ENCODE measurements at regions of chr4 and their contacts with region 1.

Region 1: GRCh38 chr4:74531963-74532794 is 87.2 kb downstream of the AREG start:
- DNase-seq: peak; percentile 78
- H3K4me3 ChIP-seq: no peak overlapping the region
- H3K27ac ChIP-seq: peak overlapping the region; percentile 43
- H3K4me1 ChIP-seq: peaks cover 13% of the 10 kb centered on the region
- H3K27me3 ChIP-seq: no peaks in the 10 kb centered on the region
- CTCF ChIP-seq: peak; percentile 73 to 85

Region 2: DNA sequence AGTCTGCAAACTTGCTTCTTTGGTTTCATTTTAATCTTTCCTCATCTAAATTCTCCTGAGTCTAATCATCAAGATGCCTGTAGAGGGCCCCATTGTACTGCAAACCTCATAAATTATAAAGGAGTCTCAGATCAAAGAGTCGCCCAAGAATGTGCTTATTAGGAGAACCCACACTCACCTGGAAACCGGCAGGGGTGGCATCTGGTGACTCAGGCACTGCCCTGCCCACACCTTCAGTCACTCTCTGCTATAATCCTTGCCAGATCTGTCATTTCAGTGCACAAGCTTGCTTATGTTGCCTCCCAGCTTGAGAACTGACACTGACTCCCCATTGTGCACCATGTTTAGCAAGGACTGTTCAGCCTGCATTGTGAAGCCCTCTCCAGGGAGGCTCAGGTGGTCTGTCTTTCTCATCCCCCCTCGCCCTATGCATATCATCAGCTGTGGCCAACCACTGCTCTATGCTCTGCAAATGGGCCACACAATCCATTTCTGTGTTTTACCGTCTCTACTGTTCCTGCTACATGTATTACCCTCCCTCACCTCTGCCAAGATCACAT is 211.5 kb before region 1 on chr4:
- CTCF ChIA-PET with region 1: interaction called, 3 read pairs
- dilution Hi-C with region 1: no loop called
- in situ Hi-C with region 1: no loop called
- intact Hi-C with region 1: loop called (anchors 1 kb)
- DNase-seq: peak; percentile 90
- H3K4me3 ChIP-seq: no peak overlapping the region
- H3K27ac ChIP-seq: peak overlapping the region; percentile 20
- H3K4me1 ChIP-seq: peaks cover 15% of the 10 kb centered on the region
- H3K27me3 ChIP-seq: no peaks in the 10 kb centered on the region
- CTCF ChIP-seq: peak; percentile 50 to 66

Region 3: DNA sequence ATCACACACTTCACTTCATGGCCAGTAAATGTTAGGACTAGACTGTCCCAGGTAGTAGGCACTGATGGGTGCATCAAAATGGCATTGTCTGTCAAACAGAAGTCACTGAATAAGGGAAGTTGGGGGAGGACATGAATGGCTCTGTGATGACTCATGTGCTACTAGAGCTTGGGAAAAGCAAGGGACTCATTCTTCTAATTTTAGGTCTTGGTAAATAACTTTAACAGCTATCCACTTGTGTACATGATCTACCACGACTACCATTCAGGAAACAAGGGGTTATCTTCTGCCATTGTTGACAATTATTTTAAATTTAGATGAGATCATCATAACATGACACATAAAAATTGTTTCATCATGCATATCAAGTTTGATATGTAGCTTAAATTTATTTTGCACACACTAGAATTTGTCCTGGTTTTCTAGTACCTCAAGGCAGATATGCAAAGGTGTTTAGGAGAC is 80.9 kb before region 1 on chr4:
- CTCF ChIA-PET with region 1: interaction called, 3 read pairs
- dilution Hi-C with region 1: loop called (anchors 5 kb)
- in situ Hi-C with region 1: loop called (anchors 5 to 10 kb)
- intact Hi-C with region 1: loop called (anchors 1 kb)
- DNase-seq: peak; percentile 63
- H3K4me3 ChIP-seq: peak overlapping the region; percentile 83 to 93 (median 93)
- H3K27ac ChIP-seq: peak overlapping the region; percentile 99
- H3K4me1 ChIP-seq: peaks cover 11% of the 10 kb centered on the region
- H3K27me3 ChIP-seq: no peaks in the 10 kb centered on the region
- CTCF ChIP-seq: no peak

Region 4: GRCh38 chr4:74623041-74623440 is 90.9 kb after region 1 on chr4:
- CTCF ChIA-PET with region 1: no interaction called
- dilution Hi-C with region 1: no loop called
- in situ Hi-C with region 1: no loop called
- intact Hi-C with region 1: loop called (anchors 1 kb)
- DNase-seq: peak; percentile 52
- H3K4me3 ChIP-seq: no peak overlapping the region
- H3K27ac ChIP-seq: peak overlapping the region; percentile 91
- H3K4me1 ChIP-seq: peaks cover 75% of the 10 kb centered on the region
- H3K27me3 ChIP-seq: no peaks in the 10 kb centered on the region
- CTCF ChIP-seq: peak; percentile 50 to 64

Region 5: GRCh38 chr4:74793757-74794340 is 261.7 kb after region 1 on chr4:
- CTCF ChIA-PET with region 1: no interaction called
- dilution Hi-C with region 1: no loop called
- in situ Hi-C with region 1: no loop called
- intact Hi-C with region 1: loop called (anchors 10 kb)
- DNase-seq: peak; percentile 44
- H3K4me3 ChIP-seq: peak overlapping the region; percentile 68 to 84 (median 71)
- H3K27ac ChIP-seq: peak overlapping the region; percentile 37
- H3K4me1 ChIP-seq: peaks cover 12% of the 10 kb centered on the region
- H3K27me3 ChIP-seq: no peaks in the 10 kb centered on the region
- CTCF ChIP-seq: peak; percentile 24 to 59